ENCODE measurements at regions of chr11 and their contacts with region 1.

Region 1: DNA sequence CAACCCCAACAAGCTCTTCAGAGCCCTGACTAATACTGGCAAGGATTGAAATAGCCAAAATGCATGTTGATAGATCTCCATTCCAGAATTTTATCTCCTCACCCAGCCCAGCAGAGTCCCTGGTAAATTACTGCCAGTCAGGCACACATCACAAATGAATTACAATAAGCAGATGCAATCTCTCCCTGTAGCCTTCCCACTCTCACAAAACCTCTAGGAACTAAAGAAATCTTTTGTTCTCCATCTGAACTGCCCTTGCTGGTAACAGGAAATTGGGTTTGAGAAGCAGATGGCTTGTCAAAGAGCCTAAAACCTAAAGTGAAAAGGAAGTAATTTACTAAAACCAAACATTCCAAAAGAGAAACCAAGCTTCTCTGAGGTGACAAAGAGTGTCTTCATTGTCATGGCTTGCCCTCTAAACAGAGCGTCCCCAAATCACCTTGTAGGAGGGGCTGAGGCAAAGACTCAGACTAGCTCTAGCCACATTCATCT is 59.5 kb downstream of the FAM168A start:
- DNase-seq: peak; percentile 71

Region 2: DNA sequence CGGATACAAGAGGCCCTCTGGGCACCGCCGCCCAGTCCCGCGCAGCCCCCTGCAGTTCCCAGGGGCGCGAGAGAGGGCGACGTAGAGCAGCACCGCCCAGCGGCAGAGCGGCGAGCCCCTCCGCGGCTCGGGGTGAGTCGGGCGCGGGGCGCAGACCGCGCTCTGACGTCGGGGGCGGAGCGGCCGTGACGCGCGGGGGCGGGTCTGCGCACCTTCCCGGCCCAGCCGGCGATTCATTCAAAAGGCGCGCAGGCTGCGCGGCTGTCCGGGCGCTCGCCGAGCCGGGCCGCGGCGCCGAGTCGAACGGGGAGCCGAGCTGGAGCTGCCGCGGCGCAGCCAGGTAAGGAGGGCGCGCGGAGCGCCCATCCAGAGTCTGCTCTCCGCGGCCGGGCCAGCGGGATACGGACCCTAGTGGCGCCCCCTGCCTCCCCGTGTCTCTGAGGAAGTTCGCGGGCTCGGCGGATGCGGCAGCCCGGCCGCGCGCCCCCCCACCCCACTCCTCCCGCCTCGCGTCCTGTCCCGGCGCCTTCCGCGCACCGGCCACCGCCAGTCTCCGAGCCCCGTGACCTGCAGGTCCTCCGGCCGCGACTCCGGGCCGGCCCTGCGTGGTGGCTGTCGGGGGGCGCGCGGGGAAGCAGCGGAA is 162.1 kb before region 1 on chr11 and contains the start of gene RELT:
- in situ Hi-C with region 1: no loop called
- DNase-seq: peak; percentile 92
- total RNA-seq, gene RELT: 11.8 and 11.9 TPM in 2 replicates

Region 3: DNA sequence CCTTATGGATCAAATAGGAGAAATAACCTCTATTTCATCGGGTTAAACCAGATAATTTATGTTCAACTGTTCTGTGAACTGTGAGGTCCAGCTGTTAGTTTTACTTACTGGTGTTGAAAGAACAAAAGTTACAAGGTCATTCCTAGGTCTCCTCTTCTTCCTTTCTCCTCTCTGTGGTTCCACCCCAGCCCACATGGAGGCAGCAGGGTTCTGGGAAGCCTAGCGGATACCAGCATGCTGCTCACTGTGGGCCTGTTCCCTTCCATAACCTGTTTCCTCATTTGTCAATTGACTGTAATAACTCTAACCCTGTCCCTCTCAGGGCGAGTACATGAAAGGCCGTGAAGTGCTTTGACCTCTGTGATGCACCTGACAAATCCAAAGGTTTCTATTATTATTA is 134.4 kb before region 1 on chr11:
- in situ Hi-C with region 1: no loop called
- DNase-seq: peak; percentile 91

Region 4: DNA sequence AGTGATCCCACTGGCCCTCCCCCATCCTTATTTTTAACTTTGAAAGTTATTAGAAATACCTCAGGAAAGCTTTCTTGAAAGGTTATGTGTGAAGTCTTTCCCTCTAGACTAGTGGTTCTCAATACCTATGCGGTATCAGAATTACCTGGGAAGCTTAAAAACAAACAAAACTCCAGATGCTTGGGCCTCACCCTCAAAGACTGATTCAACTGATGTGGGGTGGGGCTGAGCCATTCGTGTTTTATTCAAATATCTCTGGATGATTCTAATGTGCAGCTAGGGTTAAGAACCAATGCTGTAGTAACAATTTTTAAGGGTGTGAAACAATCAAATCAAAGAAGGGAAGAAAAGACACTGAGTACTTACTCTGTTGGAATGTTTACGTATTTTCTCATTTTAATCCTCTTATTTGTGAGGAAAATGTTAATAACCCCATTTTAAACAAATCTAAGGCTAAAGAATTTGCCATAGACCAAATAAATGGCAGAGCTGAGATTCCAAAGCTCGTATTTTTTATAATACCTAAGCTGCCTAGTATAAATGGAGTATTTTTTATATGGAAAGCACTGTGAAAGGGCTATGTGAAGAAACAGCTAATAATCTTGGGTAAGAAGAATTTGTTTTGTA is 155.6 kb after region 1 on chr11:
- in situ Hi-C with region 1: loop called (anchors 10 kb)
- DNase-seq: no peak

Measured in SK-MEL-5 (cell line).